Activated CD4-positive, alpha-beta T cell treated with anti-CD3 and anti-CD28 coated beads for 36 hours (primary cell): ENCODE measurements at regions of chr12 and their contacts with region 1.

Region 1: DNA sequence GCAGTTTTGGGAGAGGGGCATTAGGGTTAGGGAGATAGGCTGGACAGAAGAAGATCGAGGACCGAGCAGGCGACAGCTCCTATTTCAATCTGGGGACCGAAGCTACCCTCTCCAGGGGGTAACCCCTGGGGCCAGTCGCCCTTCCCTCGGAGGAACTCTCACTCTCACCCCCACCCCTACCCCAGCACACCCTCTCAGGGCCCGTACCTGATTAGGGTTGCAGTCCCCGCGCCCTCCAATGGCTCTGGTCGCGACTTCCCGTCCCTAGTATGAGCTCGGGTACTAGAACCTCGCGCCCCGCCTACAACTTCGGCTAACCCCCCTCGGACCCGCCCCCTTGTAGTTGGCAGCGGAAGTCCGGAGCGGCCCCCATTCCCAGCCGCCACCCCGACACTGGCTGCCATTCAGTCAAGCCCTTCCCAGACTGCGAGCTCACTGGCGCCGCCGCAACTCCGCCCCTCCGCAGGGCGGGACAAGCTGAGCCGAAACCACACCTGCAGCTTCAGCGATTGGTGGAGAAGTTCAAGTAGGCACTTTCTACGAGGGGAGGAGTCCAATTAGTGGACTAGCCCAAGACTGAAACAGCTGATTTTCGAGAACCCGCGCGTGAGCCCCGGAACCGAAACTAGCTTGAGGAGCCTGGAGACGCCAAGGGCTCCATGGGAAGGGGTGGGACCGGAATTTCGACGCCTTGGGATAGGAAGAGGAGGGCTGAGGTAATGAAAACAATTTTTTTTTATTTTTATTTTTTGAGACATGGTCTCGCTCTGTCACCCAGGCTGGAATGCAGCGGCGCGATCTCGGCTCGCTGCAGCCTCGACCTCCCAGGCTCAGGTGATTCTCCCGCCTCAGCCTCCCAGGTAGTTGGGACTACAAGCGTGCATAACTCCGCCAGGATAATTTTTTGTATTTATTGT is at the start of gene STAT2:
- DNase-seq: peak; percentile 99
- ATAC-seq: peak; percentile 97
- H3K4me3 Mint-ChIP-seq: peak within 1 kb of the TSS; percentile 86
- H3K27ac Mint-ChIP-seq: peak within 1 kb of the TSS; percentile 95
- H3K4me1 Mint-ChIP-seq: peaks cover 23% of the 10 kb centered on the region
- H3K27me3 Mint-ChIP-seq: no peaks in the 10 kb centered on the region
- total RNA-seq, gene STAT2: 116 to 124 TPM

Region 2: GRCh38 chr12:56152318-56153033 is 207.6 kb before region 1 on chr12 and contains the start of gene MYL6B:
- CTCF ChIA-PET with region 1: no interaction called
- POLR2A ChIA-PET with region 1: interaction called, 6 read pairs
- intact Hi-C with region 1: loop called in 1 of 2 experiments (anchors 2 kb)
- DNase-seq: peak; percentile 98
- ATAC-seq: peak; percentile 92
- H3K4me3 Mint-ChIP-seq: peak within 1 kb of the TSS; percentile 88
- H3K27ac Mint-ChIP-seq: peak within 1 kb of the TSS; percentile 99
- H3K4me1 Mint-ChIP-seq: peaks cover 29% of the 10 kb centered on the region
- H3K27me3 Mint-ChIP-seq: no peaks in the 10 kb centered on the region
- total RNA-seq, gene MYL6B: 76.3 to 79.3 TPM

Region 3: GRCh38 chr12:56299853-56300643 is 60.1 kb before region 1 on chr12 and contains the start of gene CS:
- CTCF ChIA-PET with region 1: interaction called, 6 read pairs
- POLR2A ChIA-PET with region 1: interaction called, 3 read pairs
- intact Hi-C with region 1: loop called in 1 of 2 experiments (anchors 1 kb)
- DNase-seq: peak; percentile 99
- ATAC-seq: peak; percentile 98
- H3K4me3 Mint-ChIP-seq: peak within 1 kb of the TSS; percentile 96
- H3K27ac Mint-ChIP-seq: peak within 1 kb of the TSS; percentile 91
- H3K4me1 Mint-ChIP-seq: peaks cover 49% of the 10 kb centered on the region
- H3K27me3 Mint-ChIP-seq: no peaks in the 10 kb centered on the region
- total RNA-seq, gene CS: 197 to 293 TPM

Region 4: GRCh38 chr12:56341616-56342015 is 18.5 kb before region 1 on chr12:
- CTCF ChIA-PET with region 1: interaction called, 15 read pairs
- POLR2A ChIA-PET with region 1: interaction called, 27 read pairs
- intact Hi-C with region 1: loop called (anchors 1 kb)
- DNase-seq: no peak
- ATAC-seq: no peak
- H3K4me3 Mint-ChIP-seq: no peak overlapping the region
- H3K27ac Mint-ChIP-seq: peak overlapping the region; percentile 15
- H3K4me1 Mint-ChIP-seq: peaks cover 41% of the 10 kb centered on the region
- H3K27me3 Mint-ChIP-seq: no peaks in the 10 kb centered on the region

Region 5: DNA sequence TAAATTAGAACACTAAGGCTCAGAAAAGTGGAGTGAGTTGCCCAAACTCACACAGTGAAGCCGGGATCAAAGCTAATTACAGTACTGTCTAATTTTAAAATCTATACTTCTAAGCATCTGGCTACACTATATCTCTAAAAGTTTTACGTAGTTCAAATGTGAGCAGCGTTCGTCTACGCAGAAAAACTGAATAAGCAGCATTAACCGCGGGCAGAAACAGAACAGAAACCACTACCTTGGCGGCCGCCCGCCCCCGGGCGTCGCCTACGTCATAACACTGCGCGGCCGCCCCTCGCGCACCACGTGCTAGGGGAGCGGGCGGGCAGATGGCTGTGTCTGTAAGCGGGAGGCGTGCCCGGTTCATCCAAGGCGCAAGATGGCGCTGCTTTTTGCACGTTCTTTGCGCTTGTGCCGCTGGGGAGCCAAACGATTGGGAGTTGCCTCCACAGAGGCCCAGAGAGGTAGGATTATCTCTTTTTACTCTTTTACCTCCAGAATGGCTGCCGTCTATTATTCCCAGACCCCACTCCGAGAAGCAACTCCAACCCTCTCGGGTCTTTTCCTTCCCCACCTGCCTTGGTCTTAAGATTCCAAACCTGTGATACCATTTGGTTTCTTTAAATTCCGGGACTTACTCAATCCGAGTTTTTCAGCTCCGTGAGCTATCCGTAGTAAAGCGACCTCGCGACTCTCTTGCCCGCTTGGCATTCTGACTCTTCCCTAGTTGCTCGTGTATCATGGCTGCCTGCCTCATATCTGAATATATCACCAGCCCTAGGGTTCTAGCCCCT is 108.3 kb after region 1 on chr12 and contains the start of gene SPRYD4:
- CTCF ChIA-PET with region 1: interaction called, 7 read pairs
- POLR2A ChIA-PET with region 1: interaction called, 3 read pairs
- intact Hi-C with region 1: loop called (anchors 1 kb)
- DNase-seq: peak; percentile 96
- ATAC-seq: peak; percentile 90
- H3K4me3 Mint-ChIP-seq: peak within 1 kb of the TSS; percentile 91
- H3K27ac Mint-ChIP-seq: peak within 1 kb of the TSS; percentile 99
- H3K4me1 Mint-ChIP-seq: peaks cover 40% of the 10 kb centered on the region
- H3K27me3 Mint-ChIP-seq: no peaks in the 10 kb centered on the region
- total RNA-seq, gene SPRYD4: 3.1 TPM